HepG2 (cell line): ENCODE measurements at regions of chr5 and their contacts with region 1.

Region 1: GRCh38 chr5:32193591-32193990 is 19.5 kb upstream of the GOLPH3 start:
- DNase-seq: peak; percentile 86
- ATAC-seq: peak; percentile 93
- H3K4me3 ChIP-seq: peak overlapping the region; percentile 31 to 56 (median 43)
- H3K27ac ChIP-seq: no peak overlapping the region
- H3K4me1 ChIP-seq: peaks cover 11% of the 10 kb centered on the region
- H3K27me3 ChIP-seq: no peaks in the 10 kb centered on the region
- CTCF ChIP-seq: 0 out of 2 replicates have a peak, but pooled peaks have one; percentile 6
- EP300 ChIP-seq: no peak
- POLR2A ChIP-seq: no peak
- RAD21 ChIP-seq: no peak

Region 2: GRCh38 chr5:32092938-32093812 is 100.4 kb before region 1 on chr5:
- CTCF ChIA-PET with region 1: no interaction called
- POLR2A ChIA-PET with region 1: no interaction called
- in situ Hi-C with region 1: no loop called
- intact Hi-C with region 1: no loop called
- DNase-seq: peak; percentile 75
- ATAC-seq: peak; percentile 84
- H3K4me3 ChIP-seq: no peak overlapping the region
- H3K27ac ChIP-seq: no peak overlapping the region
- H3K4me1 ChIP-seq: peaks cover 16% of the 10 kb centered on the region
- H3K27me3 ChIP-seq: no peaks in the 10 kb centered on the region
- CTCF ChIP-seq: peak; percentile 88
- EP300 ChIP-seq: no peak
- POLR2A ChIP-seq: no peak
- RAD21 ChIP-seq: peak; percentile 69

Region 3: DNA sequence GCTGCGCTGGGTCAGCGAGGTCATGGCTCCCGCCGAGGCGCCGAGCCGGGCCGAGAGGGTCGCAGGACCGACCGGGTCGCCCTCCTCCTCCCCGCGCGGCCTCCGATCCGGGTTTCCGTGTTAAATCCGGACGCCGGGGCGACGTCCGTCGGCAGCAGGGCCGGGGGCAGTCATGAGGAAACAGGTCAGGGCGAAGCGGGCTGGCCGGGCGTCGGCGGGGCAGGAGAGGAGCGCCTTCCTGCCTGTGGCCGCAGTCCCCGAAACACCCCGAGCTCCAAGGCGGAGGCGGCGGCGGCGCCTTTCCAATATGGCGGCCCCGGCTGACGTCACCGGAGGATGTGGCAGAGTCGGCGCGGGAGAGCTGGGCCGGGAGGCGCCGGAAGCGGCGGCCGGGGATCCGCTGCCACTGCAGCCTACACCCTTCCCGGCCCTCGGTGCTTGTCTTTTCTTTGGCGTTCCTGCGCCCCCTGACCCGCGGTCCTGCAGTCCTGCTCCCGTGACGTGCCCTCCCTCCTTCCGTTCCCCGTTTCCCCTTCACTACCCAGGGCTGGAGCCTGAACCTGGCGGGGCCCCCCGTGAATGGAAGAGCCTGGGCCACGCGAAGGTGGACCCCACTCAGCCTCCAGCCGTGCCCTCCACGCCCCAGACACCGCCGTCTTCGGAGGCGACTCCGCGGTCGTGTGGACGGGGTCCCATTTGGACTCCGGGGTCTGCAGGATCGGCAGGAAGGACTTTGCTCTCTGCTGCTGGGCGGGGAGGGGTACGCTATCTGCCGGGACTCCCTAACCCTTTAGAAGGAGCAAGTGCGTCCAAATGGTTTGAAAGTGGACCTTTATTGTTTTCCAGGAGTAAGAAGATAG is 19.4 kb before region 1 on chr5 and contains the start of gene GOLPH3:
- CTCF ChIA-PET with region 1: no interaction called
- POLR2A ChIA-PET with region 1: interaction called, 5 read pairs
- in situ Hi-C with region 1: no loop called
- intact Hi-C with region 1: loop called (anchors 1 kb)
- DNase-seq: peak; percentile 81
- ATAC-seq: peak; percentile 94
- H3K4me3 ChIP-seq: peak within 1 kb of the TSS; percentile 85 to 90 (median 87)
- H3K27ac ChIP-seq: peak within 1 kb of the TSS; percentile 99
- H3K4me1 ChIP-seq: peaks cover 39% of the 10 kb centered on the region
- H3K27me3 ChIP-seq: no peaks in the 10 kb centered on the region; a peak in 1 of 5 replicates
- CTCF ChIP-seq: no peak; the same call in none of the 2 replicates
- EP300 ChIP-seq: no peak; a peak in 1 of 4 replicates
- POLR2A ChIP-seq: peak; percentile 86 to 90
- RAD21 ChIP-seq: peak; percentile 36; the same call in 1 of the 2 replicates
- total RNA-seq, gene GOLPH3: 84.5 and 102 TPM in 2 replicates